CD8-positive, alpha-beta memory T cell (primary cell): ENCODE measurements at regions of chr22 and their contacts with region 1.

Region 1: DNA sequence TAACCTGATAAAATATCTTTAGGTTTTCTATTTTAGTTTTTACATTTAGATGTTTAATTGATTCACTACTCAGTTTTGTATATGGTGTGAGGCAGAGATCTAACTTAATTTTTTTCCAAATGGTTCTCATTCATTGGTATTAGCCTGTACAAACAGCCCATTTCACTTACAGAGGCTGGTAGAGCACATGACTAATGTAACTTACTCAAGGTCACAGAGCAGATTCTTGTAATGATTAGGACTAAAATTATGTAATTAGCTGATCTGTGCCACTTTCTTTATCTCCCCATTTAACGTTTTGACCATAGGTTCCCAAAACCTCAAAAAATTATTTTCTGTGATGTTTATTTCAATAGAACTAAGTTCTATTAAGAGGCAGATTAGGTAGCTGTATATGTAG is 16.5 kb upstream of the TNRC6B start:
- DNase-seq: no peak
- H3K4me3 ChIP-seq: no peak overlapping the region
- H3K4me3 Mint-ChIP-seq: no peak overlapping the region
- H3K27ac ChIP-seq: no peak overlapping the region
- H3K27ac Mint-ChIP-seq: peak overlapping the region in 3 of 8 donors; percentile 0 to 80 (median 30)
- H3K4me1 ChIP-seq: no peaks in the 10 kb centered on the region
- H3K4me1 Mint-ChIP-seq: peaks cover 13 to 36% (median 27%) of the 10 kb centered on the region in 3 donors
- H3K27me3 ChIP-seq: no peaks in the 10 kb centered on the region
- H3K27me3 Mint-ChIP-seq: no peaks in the 10 kb centered on the region

Region 2: GRCh38 chr22:39664485-39665200 is 496.6 kb before region 1 on chr22:
- CTCF ChIA-PET with region 1: no interaction called
- POLR2A ChIA-PET with region 1: no interaction called
- DNase-seq: peak in 2 of 5 donors; percentile 32 to 58
- H3K4me3 ChIP-seq: no peak overlapping the region
- H3K4me3 Mint-ChIP-seq: peak overlapping the region in 1 of 7 donors; percentile 73
- H3K27ac ChIP-seq: no peak overlapping the region
- H3K27ac Mint-ChIP-seq: peak overlapping the region in 1 of 8 donors; percentile 53
- H3K4me1 ChIP-seq: peaks cover 26% of the 10 kb centered on the region
- H3K4me1 Mint-ChIP-seq: peaks cover 24 to 54% (median 30%) of the 10 kb centered on the region in 3 donors
- H3K27me3 ChIP-seq: peaks cover 9% of the 10 kb centered on the region
- H3K27me3 Mint-ChIP-seq: peaks cover 10 to 15% of the 10 kb centered on the region in 2 donors

Region 3: GRCh38 chr22:40112595-40112994 is 48.6 kb before region 1 on chr22:
- CTCF ChIA-PET with region 1: no interaction called
- POLR2A ChIA-PET with region 1: interaction called, 17 read pairs
- DNase-seq: no peak
- H3K4me3 ChIP-seq: no peak overlapping the region
- H3K4me3 Mint-ChIP-seq: no peak overlapping the region
- H3K27ac ChIP-seq: no peak overlapping the region
- H3K27ac Mint-ChIP-seq: peak overlapping the region in 7 of 8 donors; percentile 32 to 88 (median 59)
- H3K4me1 ChIP-seq: peaks cover 80% of the 10 kb centered on the region
- H3K4me1 Mint-ChIP-seq: peaks cover 84 to 99% (median 98%) of the 10 kb centered on the region in 3 donors
- H3K27me3 ChIP-seq: no peaks in the 10 kb centered on the region
- H3K27me3 Mint-ChIP-seq: no peaks in the 10 kb centered on the region

Region 4: DNA sequence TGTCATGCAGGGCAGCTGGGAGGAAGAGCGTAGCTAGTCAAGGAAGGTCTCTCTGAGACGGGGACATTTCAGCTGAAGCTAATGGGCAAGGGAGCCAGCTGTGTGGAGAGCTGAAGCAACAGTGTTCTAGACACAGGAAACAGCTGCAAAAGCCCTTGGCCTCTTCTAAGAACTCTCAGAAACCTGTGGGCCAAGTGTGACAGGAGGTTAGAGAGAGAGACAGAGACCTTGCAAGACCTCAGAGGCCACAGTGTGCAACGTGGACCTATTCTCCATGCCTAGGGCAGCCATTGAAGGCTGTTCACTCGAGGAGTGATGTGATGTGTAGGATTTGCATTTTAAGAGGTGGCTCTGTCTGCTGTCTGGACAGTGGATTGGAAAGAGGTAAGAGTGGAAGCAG is 32.2 kb before region 1 on chr22:
- CTCF ChIA-PET with region 1: no interaction called
- POLR2A ChIA-PET with region 1: no interaction called
- DNase-seq: peak in 1 of 5 donors; percentile 37
- H3K4me3 ChIP-seq: no peak overlapping the region
- H3K4me3 Mint-ChIP-seq: peak overlapping the region in 4 of 7 donors; percentile 10 to 57 (median 20)
- H3K27ac ChIP-seq: no peak overlapping the region
- H3K27ac Mint-ChIP-seq: peak overlapping the region in 7 of 8 donors; percentile 15 to 87 (median 64)
- H3K4me1 ChIP-seq: peaks cover 13% of the 10 kb centered on the region
- H3K4me1 Mint-ChIP-seq: peaks cover 35 to 54% (median 49%) of the 10 kb centered on the region in 3 donors
- H3K27me3 ChIP-seq: no peaks in the 10 kb centered on the region
- H3K27me3 Mint-ChIP-seq: no peaks in the 10 kb centered on the region

Region 5: DNA sequence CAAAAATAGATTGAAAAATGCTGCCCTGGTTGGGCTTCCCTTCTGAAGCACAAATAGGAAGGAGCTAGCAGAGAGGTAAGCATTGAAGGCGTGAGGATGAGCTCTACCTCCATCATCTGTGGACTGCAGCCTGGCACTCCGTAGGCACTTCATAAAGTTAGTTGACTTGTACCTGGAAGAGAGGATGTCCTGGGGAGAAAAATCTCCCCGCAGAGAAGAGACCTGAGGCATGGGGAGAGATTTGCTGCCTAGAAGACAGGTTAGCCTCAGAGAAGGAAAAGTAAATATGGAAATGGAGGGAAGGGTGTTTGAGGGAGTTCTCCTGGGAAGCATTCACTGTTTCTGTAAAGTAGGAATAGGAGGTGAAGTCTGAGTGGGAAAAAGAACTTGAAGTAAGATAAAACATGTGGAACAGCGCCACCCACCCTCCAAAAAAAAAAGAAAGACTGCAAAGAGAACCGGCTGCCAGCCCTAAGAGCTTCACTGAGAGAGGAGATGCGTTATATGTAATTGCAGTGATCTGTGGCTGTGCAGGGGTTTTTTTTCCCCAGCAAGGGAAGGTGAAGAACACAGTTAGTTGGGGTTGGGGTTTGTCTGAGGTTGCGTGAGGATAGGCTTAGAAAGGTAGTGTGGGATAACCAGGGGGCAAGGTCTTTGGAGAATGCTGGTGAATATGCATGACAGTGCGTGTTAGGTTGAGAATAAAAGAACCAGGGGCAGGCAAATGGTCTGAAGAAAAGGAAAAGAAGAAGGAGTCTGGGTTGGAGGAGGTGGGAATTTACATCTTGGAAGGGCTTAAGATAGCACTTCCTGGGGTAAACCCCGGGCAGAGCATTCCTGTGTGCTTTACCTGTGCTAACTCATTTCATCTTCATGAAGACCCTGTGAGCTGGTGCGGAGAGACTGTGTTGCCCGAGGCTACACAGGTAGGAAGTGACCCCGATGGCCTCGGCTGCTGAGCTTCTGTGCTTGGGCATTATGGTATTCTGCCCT is 32.5 kb after region 1 on chr22:
- CTCF ChIA-PET with region 1: no interaction called
- POLR2A ChIA-PET with region 1: no interaction called
- DNase-seq: no peak
- H3K4me3 ChIP-seq: no peak overlapping the region
- H3K4me3 Mint-ChIP-seq: peak overlapping the region in 1 of 7 donors; percentile 2
- H3K27ac ChIP-seq: no peak overlapping the region
- H3K27ac Mint-ChIP-seq: peak overlapping the region; percentile 34 to 86 (median 64)
- H3K4me1 ChIP-seq: peaks cover 66% of the 10 kb centered on the region
- H3K4me1 Mint-ChIP-seq: peaks cover 66 to 93% (median 85%) of the 10 kb centered on the region in 3 donors
- H3K27me3 ChIP-seq: no peaks in the 10 kb centered on the region
- H3K27me3 Mint-ChIP-seq: no peaks in the 10 kb centered on the region